ENCODE measurements at regions of chr3 and their contacts with region 1.

Region 1: GRCh38 chr3:151146071-151146730 is 56.8 kb downstream of the GPR171 start:
- DNase-seq: peak; percentile 72 to 75
- H3K4me3 ChIP-seq: no peak overlapping the region
- H3K27ac ChIP-seq: no peak overlapping the region
- H3K4me1 ChIP-seq: peaks cover 0 to 11% of the 10 kb centered on the region in 2 donors
- H3K27me3 ChIP-seq: no peaks in the 10 kb centered on the region
- CTCF ChIP-seq: peak; percentile 43 to 93 (median 83)
- POLR2A ChIP-seq: no peak

Region 2: DNA sequence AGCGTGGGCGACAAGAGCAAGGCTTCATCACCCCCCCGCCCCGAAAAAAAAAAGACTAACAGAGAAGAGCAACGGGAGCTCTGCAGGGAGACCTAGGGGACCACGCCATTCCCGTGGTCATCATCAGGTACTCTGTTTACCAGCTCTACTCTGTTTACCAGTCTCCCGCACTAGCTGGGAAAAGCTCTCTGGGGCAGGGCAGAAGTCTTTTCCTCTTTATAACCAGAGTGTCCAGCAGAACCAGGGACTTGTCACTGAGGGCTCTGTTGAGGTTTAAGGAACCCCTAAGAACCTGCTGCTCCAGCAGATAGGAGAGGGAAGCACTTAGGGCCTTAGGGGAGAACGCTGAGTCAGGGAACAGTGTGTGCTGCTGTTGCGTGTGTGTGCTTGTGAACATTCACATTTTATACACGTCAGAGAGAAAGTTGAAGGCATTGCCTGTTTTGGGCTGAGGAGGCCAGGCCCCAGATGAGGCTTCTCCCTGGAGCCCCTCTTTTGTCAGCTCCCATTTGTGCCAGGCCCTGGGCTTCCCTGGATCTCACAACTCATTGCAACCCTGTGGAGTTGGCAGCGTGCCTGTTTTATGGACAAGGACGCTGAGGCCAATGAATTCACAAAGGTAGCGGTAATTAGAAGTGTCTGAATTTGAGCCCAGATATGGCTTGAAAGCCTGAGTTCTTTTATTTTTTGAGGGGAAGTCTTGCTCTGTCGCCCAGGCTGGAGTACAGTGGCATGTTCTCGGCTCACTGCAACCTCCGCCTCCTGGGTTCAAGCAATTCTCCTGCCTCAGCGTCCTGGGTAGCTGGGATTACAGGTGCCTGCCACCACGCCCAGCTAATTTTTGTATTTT is 418.3 kb before region 1 on chr3:
- intact Hi-C with region 1: loop called (anchors 5 kb)
- DNase-seq: no peak
- H3K4me3 ChIP-seq: no peak overlapping the region
- H3K27ac ChIP-seq: no peak overlapping the region
- H3K4me1 ChIP-seq: no peaks in the 10 kb centered on the region
- H3K27me3 ChIP-seq: no peaks in the 10 kb centered on the region
- CTCF ChIP-seq: no peak
- POLR2A ChIP-seq: no peak

Region 3: DNA sequence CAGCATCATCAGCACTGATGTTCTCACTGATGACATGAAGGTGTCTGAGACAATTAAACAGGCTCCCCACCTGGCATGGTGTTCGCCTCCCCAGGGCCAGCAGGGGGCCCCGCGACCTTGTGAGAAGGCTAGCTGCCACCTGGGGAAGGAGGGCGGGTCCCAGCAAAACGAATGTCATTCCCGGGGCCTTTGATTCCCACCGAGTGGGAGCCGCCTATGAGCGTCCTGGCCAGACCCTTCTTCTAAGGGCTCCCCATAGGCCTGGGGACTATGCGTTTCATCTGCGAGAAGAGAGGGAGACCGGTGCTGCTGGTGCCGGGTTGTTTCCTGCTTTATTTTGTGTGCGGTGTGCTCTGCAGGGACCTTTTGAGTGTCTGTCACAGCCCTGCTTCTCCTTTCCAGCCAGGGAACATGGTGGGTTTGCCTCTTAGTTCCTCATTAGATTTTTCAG is 220.4 kb before region 1 on chr3:
- intact Hi-C with region 1: loop called (anchors 5 kb)
- DNase-seq: peak; percentile 63 to 68
- H3K4me3 ChIP-seq: no peak overlapping the region
- H3K27ac ChIP-seq: no peak overlapping the region
- H3K4me1 ChIP-seq: peaks cover 0 to 4% of the 10 kb centered on the region in 2 donors
- H3K27me3 ChIP-seq: no peaks in the 10 kb centered on the region
- CTCF ChIP-seq: peak in 5 of 6 experiments; percentile 24 to 74 (median 68)
- POLR2A ChIP-seq: no peak

Measured in thyroid gland (tissue), 4 donors.